PC-9 (cell line): ENCODE measurements at regions of chr12 and their contacts with region 1.

Region 1: DNA sequence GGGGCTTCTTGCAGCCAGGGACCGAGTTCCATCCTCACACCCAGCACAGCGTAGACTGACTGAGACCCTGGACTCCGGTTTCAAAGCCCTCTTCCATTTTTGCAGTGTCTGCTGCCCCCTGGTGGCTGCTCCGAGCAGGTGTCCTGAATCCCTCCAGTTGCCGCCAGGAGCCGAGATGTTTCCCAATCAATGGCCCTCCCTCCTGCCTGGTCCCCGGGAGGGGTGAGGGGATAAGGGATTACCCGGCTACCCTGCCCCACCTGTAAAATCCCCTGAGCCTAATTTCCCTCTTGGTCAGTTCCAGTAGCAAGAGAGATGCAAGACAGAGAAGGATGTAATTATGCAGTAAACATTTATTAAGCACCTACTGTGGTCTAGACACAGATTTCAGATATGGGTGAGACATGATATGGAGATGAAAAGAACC is 55.0 kb downstream of the PHETA1 start:
- DNase-seq: peak; percentile 49 to 68
- H3K4me3 ChIP-seq: no peak overlapping the region
- H3K27ac ChIP-seq: no peak overlapping the region
- H3K4me1 ChIP-seq: peaks cover 36% of the 10 kb centered on the region
- H3K27me3 ChIP-seq: no peaks in the 10 kb centered on the region
- CTCF ChIP-seq: peak; percentile 96

Region 2: DNA sequence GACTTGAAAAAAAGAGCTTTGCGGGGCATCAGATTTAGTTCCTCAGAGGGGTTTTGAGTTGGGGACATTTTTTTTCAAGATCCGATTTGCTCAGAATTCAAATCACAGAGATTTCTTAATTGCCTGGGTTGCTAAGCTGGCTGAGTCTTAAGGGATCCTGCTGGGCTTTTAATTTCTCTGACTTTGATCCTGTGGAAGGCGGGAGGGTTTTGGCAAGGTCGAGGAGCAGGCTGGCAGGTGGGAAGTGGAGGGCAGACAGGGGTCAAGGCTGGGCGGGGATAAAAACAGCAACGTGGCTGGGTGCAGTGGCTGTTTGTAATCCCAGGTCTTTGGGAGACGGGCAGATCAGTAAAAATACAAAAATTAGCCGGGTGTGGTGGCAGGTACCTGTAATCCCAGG is 500.6 kb before region 1 on chr12:
- CTCF ChIA-PET with region 1: no interaction called
- POLR2A ChIA-PET with region 1: no interaction called
- intact Hi-C with region 1: no loop called
- DNase-seq: no peak
- H3K4me3 ChIP-seq: no peak overlapping the region
- H3K27ac ChIP-seq: no peak overlapping the region
- H3K4me1 ChIP-seq: peaks cover 9% of the 10 kb centered on the region; the same call in 1 of the 2 replicates
- H3K27me3 ChIP-seq: peaks cover 10% of the 10 kb centered on the region; the same call in 1 of the 2 replicates
- CTCF ChIP-seq: no peak

Region 3: GRCh38 chr12:111024205-111024801 is 289.5 kb before region 1 on chr12:
- CTCF ChIA-PET with region 1: no interaction called
- POLR2A ChIA-PET with region 1: no interaction called
- intact Hi-C with region 1: loop called (anchors 5 kb)
- DNase-seq: peak in 1 of 2 experiments; percentile 62
- H3K4me3 ChIP-seq: no peak overlapping the region
- H3K27ac ChIP-seq: no peak overlapping the region
- H3K4me1 ChIP-seq: no peaks in the 10 kb centered on the region
- H3K27me3 ChIP-seq: peaks cover 88% of the 10 kb centered on the region
- CTCF ChIP-seq: peak; percentile 89

Region 4: GRCh38 chr12:111355201-111355925 is 41.5 kb after region 1 on chr12:
- CTCF ChIA-PET with region 1: no interaction called
- POLR2A ChIA-PET with region 1: no interaction called
- intact Hi-C with region 1: no loop called
- DNase-seq: no peak
- H3K4me3 ChIP-seq: no peak overlapping the region
- H3K27ac ChIP-seq: no peak overlapping the region
- H3K4me1 ChIP-seq: no peaks in the 10 kb centered on the region
- H3K27me3 ChIP-seq: no peaks in the 10 kb centered on the region
- CTCF ChIP-seq: no peak